Activated CD4-positive, alpha-beta memory T cell treated with anti-CD3 and anti-CD28 coated beads, Interleukin-2, amount 10 ng/mL, durations not matched to agents 7 days and 5 days (primary cell): ENCODE measurements at regions of chr10 and their contacts with region 1.

Region 1: GRCh38 chr10:50636618-50637579 is 13.1 kb upstream of the SGMS1 start:
- DNase-seq: peak; percentile 55
- H3K4me3 Mint-ChIP-seq: peak overlapping the region; percentile 45
- H3K27ac Mint-ChIP-seq: peak overlapping the region; percentile 34
- H3K4me1 Mint-ChIP-seq: peaks cover 34% of the 10 kb centered on the region
- H3K27me3 Mint-ChIP-seq: peaks cover 63% of the 10 kb centered on the region

Region 2: GRCh38 chr10:50490241-50490640 is 146.7 kb before region 1 on chr10:
- CTCF ChIA-PET with region 1: no interaction called
- POLR2A ChIA-PET with region 1: no interaction called
- DNase-seq: no peak
- H3K4me3 Mint-ChIP-seq: no peak overlapping the region
- H3K27ac Mint-ChIP-seq: no peak overlapping the region
- H3K4me1 Mint-ChIP-seq: no peaks in the 10 kb centered on the region
- H3K27me3 Mint-ChIP-seq: no peaks in the 10 kb centered on the region

Region 3: GRCh38 chr10:50624866-50625692 is 11.8 kb before region 1 on chr10:
- CTCF ChIA-PET with region 1: interaction called, 12 read pairs
- POLR2A ChIA-PET with region 1: interaction called, 53 read pairs
- DNase-seq: peak; percentile 58
- H3K4me3 Mint-ChIP-seq: peak overlapping the region; percentile 90
- H3K27ac Mint-ChIP-seq: peak overlapping the region; percentile 87
- H3K4me1 Mint-ChIP-seq: peaks cover 39% of the 10 kb centered on the region
- H3K27me3 Mint-ChIP-seq: peaks cover 13% of the 10 kb centered on the region